Ovary (tissue), 10 donors: ENCODE measurements at regions of chr3 and their contacts with region 1.

Region 1: GRCh38 chr3:169644750-169645149 is 18.8 kb downstream of the MECOM start:
- DNase-seq: no peak
- H3K4me3 ChIP-seq: no peak overlapping the region
- H3K27ac ChIP-seq: no peak overlapping the region
- H3K4me1 ChIP-seq: no peaks in the 10 kb centered on the region
- H3K27me3 ChIP-seq: no peaks in the 10 kb centered on the region
- CTCF ChIP-seq: no peak
- EP300 ChIP-seq: no peak
- POLR2A ChIP-seq: no peak

Region 2: DNA sequence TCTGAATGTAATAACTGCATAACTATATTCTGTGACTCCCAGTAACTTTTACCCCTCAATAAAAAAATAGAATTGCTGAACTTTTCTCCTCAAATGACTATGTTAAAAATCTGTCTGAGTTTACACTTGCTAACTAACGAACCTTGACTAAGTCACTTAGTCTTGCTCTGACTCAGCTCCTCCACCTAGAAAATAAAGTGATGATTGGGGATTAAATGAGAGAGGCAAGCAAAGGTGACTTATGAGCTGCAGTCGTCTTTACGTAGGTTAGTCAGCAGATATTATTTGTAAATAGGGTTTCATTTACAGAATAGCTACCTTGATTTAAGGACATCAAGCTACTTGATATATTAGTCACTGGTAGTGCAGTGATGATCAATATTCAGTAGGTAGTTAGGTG is 458.2 kb before region 1 on chr3:
- intact Hi-C with region 1: no loop called
- DNase-seq: no peak
- H3K4me3 ChIP-seq: no peak overlapping the region
- H3K27ac ChIP-seq: no peak overlapping the region
- H3K4me1 ChIP-seq: no peaks in the 10 kb centered on the region
- H3K27me3 ChIP-seq: no peaks in the 10 kb centered on the region
- CTCF ChIP-seq: no peak
- EP300 ChIP-seq: no peak
- POLR2A ChIP-seq: no peak

Region 3: DNA sequence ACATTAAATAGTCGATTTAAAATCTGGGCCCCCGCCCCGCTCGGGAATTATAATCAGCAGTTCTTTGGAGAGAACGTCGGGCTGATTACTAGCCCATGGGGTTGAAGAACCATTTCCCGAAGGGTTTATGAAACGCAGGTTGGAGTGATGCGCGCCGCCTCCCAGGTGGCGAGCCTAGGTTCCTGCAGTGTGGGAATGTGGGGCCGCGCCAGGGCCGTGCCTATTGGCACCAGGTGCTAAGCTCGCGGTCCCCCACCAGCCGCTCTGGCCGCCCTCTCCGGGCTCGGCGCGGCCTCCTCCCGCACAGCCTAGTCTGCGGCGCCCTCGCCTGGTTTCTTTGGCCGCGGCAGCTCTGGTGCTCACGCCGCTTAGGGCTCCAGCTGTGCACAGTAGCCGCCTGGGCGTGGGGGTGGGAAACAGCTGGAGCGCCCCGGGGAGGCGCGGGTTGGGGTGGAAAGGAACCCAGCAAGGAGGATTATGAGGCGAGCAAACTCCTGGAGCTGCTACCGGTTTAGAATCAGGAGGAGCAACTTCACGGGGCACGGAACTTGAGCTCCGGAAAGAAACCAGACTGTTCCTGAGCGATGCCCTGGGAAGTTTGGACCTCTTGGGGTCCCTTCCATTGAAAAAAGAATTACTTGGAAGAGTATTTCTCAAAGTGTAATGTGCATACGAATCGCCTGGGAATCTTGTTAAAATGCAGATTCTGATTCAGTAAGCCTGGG is 24.4 kb after region 1 on chr3:
- intact Hi-C with region 1: no loop called
- DNase-seq: peak; percentile 27 to 71 (median 40)
- H3K4me3 ChIP-seq: peak overlapping the region; percentile 30
- H3K27ac ChIP-seq: no peak overlapping the region
- H3K4me1 ChIP-seq: peaks cover 3% of the 10 kb centered on the region
- H3K27me3 ChIP-seq: no peaks in the 10 kb centered on the region
- CTCF ChIP-seq: no peak
- EP300 ChIP-seq: no peak
- POLR2A ChIP-seq: no peak

Region 4: GRCh38 chr3:170499565-170500156 is 854.9 kb after region 1 on chr3:
- intact Hi-C with region 1: no loop called
- DNase-seq: peak; percentile 73 to 85 (median 82)
- H3K4me3 ChIP-seq: no peak overlapping the region
- H3K27ac ChIP-seq: peak overlapping the region in 1 of 2 donors; percentile 19
- H3K4me1 ChIP-seq: peaks cover 35% of the 10 kb centered on the region
- H3K27me3 ChIP-seq: no peaks in the 10 kb centered on the region
- CTCF ChIP-seq: peak; percentile 36 to 64 (median 59)
- EP300 ChIP-seq: no peak
- POLR2A ChIP-seq: no peak

Region 5: GRCh38 chr3:170598091-170598502 is 953.3 kb after region 1 on chr3:
- intact Hi-C with region 1: loop called in 1 of 4 experiments (anchors 5 kb)
- DNase-seq: no peak
- H3K4me3 ChIP-seq: no peak overlapping the region
- H3K27ac ChIP-seq: no peak overlapping the region
- H3K4me1 ChIP-seq: no peaks in the 10 kb centered on the region
- H3K27me3 ChIP-seq: no peaks in the 10 kb centered on the region
- CTCF ChIP-seq: no peak
- EP300 ChIP-seq: no peak
- POLR2A ChIP-seq: no peak